PC-9 (cell line): ENCODE measurements at regions of chr1 and their contacts with region 1.

Region 1: GRCh38 chr1:7667625-7668218 is 103.4 kb upstream of the VAMP3 start:
- DNase-seq: peak in 1 of 2 experiments; percentile 85
- H3K4me3 ChIP-seq: no peak overlapping the region
- H3K27ac ChIP-seq: no peak overlapping the region
- H3K4me1 ChIP-seq: no peaks in the 10 kb centered on the region
- H3K27me3 ChIP-seq: peaks cover 21% of the 10 kb centered on the region; the same call in 1 of the 2 replicates
- CTCF ChIP-seq: peak; percentile 93

Region 2: DNA sequence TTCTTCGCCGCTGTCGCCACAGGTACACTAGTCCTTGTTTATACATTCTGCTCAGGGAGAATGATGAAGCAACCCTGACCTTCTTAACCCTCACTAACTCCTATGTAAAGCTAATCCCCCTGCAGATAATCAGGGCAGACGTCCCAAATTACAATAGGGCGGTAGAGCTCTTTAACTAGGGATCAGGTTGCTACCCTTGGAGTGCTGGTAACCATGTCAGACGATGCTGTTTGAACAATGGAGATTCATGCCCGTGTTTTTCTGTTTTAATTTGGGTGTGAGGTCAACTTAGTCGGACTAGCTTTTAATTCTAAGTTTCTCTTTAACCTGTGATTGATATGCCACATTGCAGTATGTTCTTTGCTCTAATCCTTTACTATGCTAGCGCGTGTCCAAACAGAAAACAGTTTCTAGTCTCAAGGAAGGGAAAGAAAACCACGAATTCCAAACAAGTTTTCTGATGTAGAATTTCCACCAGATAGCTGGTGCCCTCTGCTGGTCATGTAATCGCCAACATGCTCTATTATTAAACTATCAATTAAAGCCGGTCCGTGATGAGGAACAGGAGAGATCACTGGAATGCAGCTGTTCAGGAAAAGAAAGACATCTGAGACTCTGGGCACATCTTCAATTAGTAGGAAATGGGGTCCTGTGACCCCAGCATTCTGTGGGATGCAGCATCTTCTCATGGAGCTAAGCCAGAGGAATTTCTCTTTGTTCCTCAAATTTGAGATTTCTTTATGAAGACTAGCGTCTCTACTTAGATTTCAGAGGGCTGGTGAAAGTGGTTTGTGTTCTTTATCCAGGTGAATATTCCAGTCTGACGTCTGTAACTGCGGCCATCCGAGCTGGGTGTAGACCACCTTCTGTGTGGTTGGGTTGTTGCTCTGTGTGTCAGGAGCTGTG is 85.0 kb after region 1 on chr1:
- CTCF ChIA-PET with region 1: interaction called, 16 read pairs
- POLR2A ChIA-PET with region 1: no interaction called
- intact Hi-C with region 1: loop called (anchors 1 kb)
- DNase-seq: peak in 1 of 2 experiments; percentile 37
- H3K4me3 ChIP-seq: peak overlapping the region; percentile 44; the same call in 1 of the 2 replicates
- H3K27ac ChIP-seq: no peak overlapping the region
- H3K4me1 ChIP-seq: no peaks in the 10 kb centered on the region
- H3K27me3 ChIP-seq: peaks cover 25% of the 10 kb centered on the region; the same call in 1 of the 2 replicates
- CTCF ChIP-seq: peak; percentile 78

Region 3: GRCh38 chr1:7902478-7903085 is 234.9 kb after region 1 on chr1:
- CTCF ChIA-PET with region 1: interaction called, 4 read pairs
- POLR2A ChIA-PET with region 1: interaction called, 8 read pairs
- intact Hi-C with region 1: loop called (anchors 1 kb)
- DNase-seq: peak; percentile 34 to 38
- H3K4me3 ChIP-seq: no peak overlapping the region
- H3K27ac ChIP-seq: no peak overlapping the region
- H3K4me1 ChIP-seq: no peaks in the 10 kb centered on the region
- H3K27me3 ChIP-seq: no peaks in the 10 kb centered on the region
- CTCF ChIP-seq: peak; percentile 65

Region 4: GRCh38 chr1:8348777-8349491 is 681.2 kb after region 1 on chr1:
- CTCF ChIA-PET with region 1: no interaction called
- POLR2A ChIA-PET with region 1: no interaction called
- intact Hi-C with region 1: loop called (anchors 2 kb)
- DNase-seq: peak in 1 of 2 experiments; percentile 59
- H3K4me3 ChIP-seq: no peak overlapping the region
- H3K27ac ChIP-seq: no peak overlapping the region
- H3K4me1 ChIP-seq: peaks cover 7% of the 10 kb centered on the region
- H3K27me3 ChIP-seq: no peaks in the 10 kb centered on the region
- CTCF ChIP-seq: peak; percentile 89